Endothelial cell of umbilical vein (primary cell): ENCODE measurements at regions of chr6 and their contacts with region 1.

Region 1: DNA sequence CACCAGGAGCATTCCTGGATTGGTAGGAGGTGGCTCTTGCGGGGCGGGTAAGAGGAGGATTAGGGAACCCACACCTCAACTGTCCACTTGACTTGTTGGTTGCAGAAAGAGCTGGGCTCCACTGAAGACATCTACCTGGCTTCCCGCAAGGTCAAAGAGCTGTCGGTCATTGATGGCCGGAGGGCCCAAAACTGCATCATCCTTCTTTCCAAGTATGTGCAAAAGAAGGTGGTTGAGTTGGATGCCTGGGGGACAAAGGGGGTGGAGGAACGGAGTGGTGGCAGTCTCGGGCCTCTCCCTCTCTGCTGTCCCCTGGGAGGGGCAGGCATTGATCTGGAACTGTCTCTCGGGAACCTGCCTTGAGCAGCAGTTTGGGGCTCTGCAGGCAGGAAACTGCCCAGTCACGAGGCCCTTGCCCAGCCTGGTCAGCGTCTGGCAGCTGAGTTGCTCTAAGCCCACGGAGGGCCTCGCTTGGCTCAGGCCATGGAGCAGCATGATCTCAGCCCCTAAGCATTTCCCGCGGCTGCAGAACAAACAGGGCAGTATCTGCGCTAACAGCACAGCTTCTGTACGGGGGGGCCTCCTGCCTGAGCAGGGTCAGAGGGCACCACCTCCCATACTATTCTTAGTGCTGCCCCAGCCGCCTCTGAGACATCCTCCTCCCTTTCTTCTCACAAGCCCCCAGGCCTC is 46.7 kb downstream of the MOCS1 start:
- DNase-seq: peak; percentile 96
- H3K4me3 ChIP-seq: no peak overlapping the region
- H3K27ac ChIP-seq: peak overlapping the region; percentile 86
- H3K4me1 ChIP-seq: peaks cover 28% of the 10 kb centered on the region
- H3K27me3 ChIP-seq: no peaks in the 10 kb centered on the region
- CTCF ChIP-seq: no peak
- POLR2A ChIP-seq: peak; percentile 38

Region 2: DNA sequence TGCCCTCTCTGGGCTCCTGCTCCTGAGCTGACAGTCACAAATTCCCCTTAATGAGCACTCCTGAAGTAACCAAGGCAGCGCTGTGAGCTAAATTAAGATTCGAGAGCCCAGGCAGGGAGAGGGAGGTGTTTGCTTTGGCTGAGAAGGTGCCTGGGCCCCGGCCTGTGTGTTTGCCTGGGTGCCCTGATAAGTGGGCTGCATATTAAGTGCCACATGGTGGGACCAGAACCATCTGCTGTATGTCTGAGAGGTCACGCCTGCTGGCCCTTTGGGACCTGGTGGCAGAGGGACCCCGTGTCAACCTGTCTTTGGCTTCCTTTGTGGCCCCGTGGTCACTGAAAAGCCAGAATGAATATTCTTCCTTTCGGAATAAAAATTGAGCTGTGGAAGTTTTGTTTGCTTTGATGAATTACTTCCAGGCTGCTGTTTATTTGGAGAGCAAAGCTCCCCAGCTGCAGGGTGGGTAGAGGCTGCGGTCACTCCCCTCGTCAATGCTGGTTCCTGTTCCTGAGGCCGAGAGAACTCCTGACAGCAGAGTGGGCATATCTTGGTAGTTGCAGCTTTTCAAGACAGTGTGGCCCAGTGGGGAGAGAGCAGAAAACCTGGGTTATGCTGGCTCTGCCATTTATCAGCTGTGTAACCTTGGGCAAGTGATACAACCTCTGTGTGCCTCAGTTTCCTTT is 547.5 kb before region 1 on chr6:
- CTCF ChIA-PET with region 1: no interaction called
- POLR2A ChIA-PET with region 1: no interaction called
- dilution Hi-C with region 1: no loop called
- intact Hi-C with region 1: no loop called
- DNase-seq: no peak
- H3K4me3 ChIP-seq: no peak overlapping the region
- H3K27ac ChIP-seq: no peak overlapping the region
- H3K4me1 ChIP-seq: no peaks in the 10 kb centered on the region
- H3K27me3 ChIP-seq: peaks cover 0 to 2% of the 10 kb centered on the region in 2 experiments
- CTCF ChIP-seq: no peak
- POLR2A ChIP-seq: no peak

Region 3: DNA sequence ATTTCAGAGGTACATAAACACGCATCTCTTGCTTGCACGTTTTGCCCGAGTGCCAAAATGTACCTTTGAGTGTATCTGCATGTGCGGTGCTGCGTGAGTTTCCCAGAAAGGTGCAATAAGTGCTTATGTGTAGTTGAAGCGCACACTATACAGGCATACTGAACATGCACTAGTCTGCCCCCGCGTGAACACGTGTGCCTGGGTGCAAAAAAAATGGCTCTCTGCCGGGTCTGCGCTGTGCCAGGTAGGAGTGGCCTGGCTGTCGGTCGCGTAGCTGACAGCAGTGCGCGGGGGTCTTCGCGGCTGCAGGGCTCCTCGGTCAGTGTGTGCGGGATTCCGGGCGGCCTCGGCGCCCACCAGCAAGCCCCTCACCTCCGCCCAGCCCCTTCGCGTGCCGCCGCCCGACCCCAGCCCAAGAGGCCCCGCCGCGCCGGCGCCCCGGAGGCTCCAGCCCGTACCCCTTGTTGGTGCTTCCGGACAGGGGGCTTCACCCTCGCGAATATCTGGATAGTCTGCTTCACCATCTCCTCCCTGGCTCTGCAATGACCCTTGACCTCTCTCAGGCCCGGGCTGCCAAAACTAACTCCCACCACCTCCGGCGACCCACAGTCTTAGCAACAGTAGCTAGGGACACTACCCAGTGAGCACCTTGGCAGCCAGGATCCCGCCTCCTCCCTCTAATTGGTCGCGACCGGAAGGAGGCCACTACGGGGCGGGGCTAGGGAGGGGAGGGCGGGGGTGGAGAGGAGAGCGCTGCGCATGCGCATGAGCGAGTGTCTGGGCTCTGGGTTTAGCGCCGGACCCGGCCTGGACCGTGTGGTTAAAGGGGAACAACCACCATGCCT is 162.5 kb before region 1 on chr6 and contains the start of gene KIF6:
- CTCF ChIA-PET with region 1: no interaction called
- POLR2A ChIA-PET with region 1: no interaction called
- dilution Hi-C with region 1: no loop called
- intact Hi-C with region 1: loop called (anchors 10 kb)
- DNase-seq: peak; percentile 34
- H3K4me3 ChIP-seq: peak within 1 kb of the TSS in 2 of 3 experiments; percentile 27 to 52
- H3K27ac ChIP-seq: no peak within 1 kb of the TSS
- H3K4me1 ChIP-seq: no peaks in the 10 kb centered on the region
- H3K27me3 ChIP-seq: no peaks in the 10 kb centered on the region
- CTCF ChIP-seq: no peak
- POLR2A ChIP-seq: no peak
- total RNA-seq, gene KIF6: not detected in 2 replicates

Region 4: GRCh38 chr6:39992861-39993622 is 105.5 kb after region 1 on chr6:
- CTCF ChIA-PET with region 1: no interaction called
- POLR2A ChIA-PET with region 1: no interaction called
- dilution Hi-C with region 1: no loop called
- intact Hi-C with region 1: no loop called
- DNase-seq: no peak
- H3K4me3 ChIP-seq: no peak overlapping the region
- H3K27ac ChIP-seq: no peak overlapping the region
- H3K4me1 ChIP-seq: no peaks in the 10 kb centered on the region
- H3K27me3 ChIP-seq: no peaks in the 10 kb centered on the region
- CTCF ChIP-seq: no peak
- POLR2A ChIP-seq: no peak